ENCODE measurements at regions of chr11 and their contacts with region 1.

Region 1: DNA sequence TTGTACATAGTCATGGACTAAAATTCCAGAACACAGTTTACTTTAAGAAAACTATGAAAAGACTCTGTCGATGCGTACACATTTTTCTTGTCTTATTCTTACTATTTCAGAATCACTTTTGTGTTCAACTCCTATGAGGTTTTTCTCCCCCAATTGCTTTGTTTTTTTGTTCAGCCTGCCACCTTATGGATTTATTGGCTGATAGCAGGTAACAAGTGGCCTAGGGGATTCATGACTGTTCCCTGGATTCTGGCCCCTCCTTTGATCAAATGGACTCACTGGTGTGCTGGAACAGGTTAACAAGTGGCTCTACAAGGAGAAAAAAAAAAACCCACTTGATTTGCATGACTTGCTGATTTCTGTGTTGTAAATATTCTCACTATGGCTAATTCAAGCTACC is 10.6 kb downstream of the MMP20 start:
- DNase-seq: no peak
- H3K4me3 Mint-ChIP-seq: no peak overlapping the region
- H3K27ac Mint-ChIP-seq: no peak overlapping the region
- H3K4me1 Mint-ChIP-seq: peaks cover 15% of the 10 kb centered on the region
- H3K27me3 Mint-ChIP-seq: peaks cover 17% of the 10 kb centered on the region

Region 2: DNA sequence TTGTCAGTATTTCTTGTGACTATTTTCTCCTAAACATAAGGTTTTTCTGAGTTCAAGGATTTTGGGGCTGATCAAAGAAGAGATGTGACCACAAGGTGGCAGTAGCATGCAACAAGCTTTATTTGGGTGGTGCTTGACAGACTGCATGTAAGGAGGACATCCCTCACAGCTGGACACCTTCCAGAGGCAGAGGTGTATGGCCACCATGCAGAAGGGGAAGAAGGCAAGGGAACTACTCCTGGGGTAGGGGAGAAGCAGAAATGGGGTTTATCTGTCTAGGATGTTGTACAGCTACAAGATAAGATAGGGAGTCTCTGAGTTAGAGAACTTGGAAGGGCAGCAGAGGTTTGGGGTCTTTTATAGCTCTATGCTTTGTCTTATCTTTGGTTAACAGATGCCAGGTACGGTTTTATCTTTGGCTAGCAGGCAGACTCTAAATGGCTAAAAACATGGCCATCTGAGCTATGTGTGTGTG is 272.6 kb before region 1 on chr11:
- intact Hi-C with region 1: loop called (anchors 1 kb)
- DNase-seq: peak; percentile 92
- H3K4me3 Mint-ChIP-seq: no peak overlapping the region
- H3K27ac Mint-ChIP-seq: no peak overlapping the region
- H3K4me1 Mint-ChIP-seq: peaks cover 28% of the 10 kb centered on the region
- H3K27me3 Mint-ChIP-seq: no peaks in the 10 kb centered on the region

Region 3: GRCh38 chr11:102367364-102367763 is 247.1 kb before region 1 on chr11:
- intact Hi-C with region 1: loop called (anchors 1 kb)
- DNase-seq: no peak
- H3K4me3 Mint-ChIP-seq: no peak overlapping the region
- H3K27ac Mint-ChIP-seq: peak overlapping the region; percentile 7
- H3K4me1 Mint-ChIP-seq: peaks cover 26% of the 10 kb centered on the region
- H3K27me3 Mint-ChIP-seq: no peaks in the 10 kb centered on the region

Region 4: DNA sequence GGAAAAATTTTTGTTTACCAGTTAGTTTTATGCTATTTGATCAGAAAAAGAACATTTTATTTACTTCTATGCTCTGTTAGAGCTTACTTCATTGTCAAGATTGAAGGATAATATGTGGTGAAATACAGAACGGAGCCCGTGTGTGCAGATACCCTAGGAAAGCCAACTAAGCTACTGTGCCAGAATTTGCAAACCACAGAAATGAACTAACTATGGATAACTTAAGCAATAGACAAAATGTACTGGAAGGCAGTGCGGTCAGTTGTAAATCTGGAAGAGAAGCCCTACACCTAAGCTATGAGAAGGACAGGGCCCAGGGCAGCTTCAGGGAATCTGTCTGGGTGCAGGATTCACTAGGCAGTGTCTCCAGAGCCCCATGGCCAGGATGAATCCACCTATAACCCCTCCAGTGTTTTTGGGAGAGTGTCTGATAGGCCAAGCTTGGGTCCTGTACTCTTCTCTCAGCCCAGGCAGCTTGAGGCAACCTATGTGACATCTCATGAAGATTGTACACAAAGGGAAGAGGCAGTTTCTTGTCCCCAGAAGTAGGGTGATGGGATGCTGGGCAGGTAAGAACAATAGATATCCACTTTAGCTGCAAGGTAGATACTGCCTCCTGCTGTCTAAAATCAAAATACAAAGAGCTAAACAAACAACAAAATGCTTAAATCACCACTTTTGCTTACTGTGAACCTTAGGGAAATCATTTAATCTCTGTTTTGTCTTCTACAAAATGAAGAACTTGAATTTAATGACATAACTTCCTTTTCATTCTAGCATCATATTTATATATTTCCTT is 96.0 kb before region 1 on chr11:
- intact Hi-C with region 1: loop called (anchors 5 kb)
- DNase-seq: no peak
- H3K4me3 Mint-ChIP-seq: no peak overlapping the region
- H3K27ac Mint-ChIP-seq: no peak overlapping the region
- H3K4me1 Mint-ChIP-seq: no peaks in the 10 kb centered on the region
- H3K27me3 Mint-ChIP-seq: peaks cover 20% of the 10 kb centered on the region

Region 5: GRCh38 chr11:102666331-102666957 is 52.0 kb after region 1 on chr11:
- intact Hi-C with region 1: loop called (anchors 2 kb)
- DNase-seq: peak; percentile 71
- H3K4me3 Mint-ChIP-seq: no peak overlapping the region
- H3K27ac Mint-ChIP-seq: no peak overlapping the region
- H3K4me1 Mint-ChIP-seq: no peaks in the 10 kb centered on the region
- H3K27me3 Mint-ChIP-seq: peaks cover 12% of the 10 kb centered on the region

Region 6: GRCh38 chr11:102864724-102865123 is 250.2 kb after region 1 on chr11:
- intact Hi-C with region 1: no loop called
- DNase-seq: no peak
- H3K4me3 Mint-ChIP-seq: no peak overlapping the region
- H3K27ac Mint-ChIP-seq: no peak overlapping the region
- H3K4me1 Mint-ChIP-seq: no peaks in the 10 kb centered on the region
- H3K27me3 Mint-ChIP-seq: peaks cover 2% of the 10 kb centered on the region

Measured in activated CD4-positive, alpha-beta T cell treated with anti-CD3 and anti-CD28 coated beads, Interleukin-2, amount 10 ng/mL, durations not matched to agents 24 days and 14 days (primary cell).